CD14-positive monocyte (primary cell): ENCODE measurements at regions of chr1 and their contacts with region 1.

Region 1: DNA sequence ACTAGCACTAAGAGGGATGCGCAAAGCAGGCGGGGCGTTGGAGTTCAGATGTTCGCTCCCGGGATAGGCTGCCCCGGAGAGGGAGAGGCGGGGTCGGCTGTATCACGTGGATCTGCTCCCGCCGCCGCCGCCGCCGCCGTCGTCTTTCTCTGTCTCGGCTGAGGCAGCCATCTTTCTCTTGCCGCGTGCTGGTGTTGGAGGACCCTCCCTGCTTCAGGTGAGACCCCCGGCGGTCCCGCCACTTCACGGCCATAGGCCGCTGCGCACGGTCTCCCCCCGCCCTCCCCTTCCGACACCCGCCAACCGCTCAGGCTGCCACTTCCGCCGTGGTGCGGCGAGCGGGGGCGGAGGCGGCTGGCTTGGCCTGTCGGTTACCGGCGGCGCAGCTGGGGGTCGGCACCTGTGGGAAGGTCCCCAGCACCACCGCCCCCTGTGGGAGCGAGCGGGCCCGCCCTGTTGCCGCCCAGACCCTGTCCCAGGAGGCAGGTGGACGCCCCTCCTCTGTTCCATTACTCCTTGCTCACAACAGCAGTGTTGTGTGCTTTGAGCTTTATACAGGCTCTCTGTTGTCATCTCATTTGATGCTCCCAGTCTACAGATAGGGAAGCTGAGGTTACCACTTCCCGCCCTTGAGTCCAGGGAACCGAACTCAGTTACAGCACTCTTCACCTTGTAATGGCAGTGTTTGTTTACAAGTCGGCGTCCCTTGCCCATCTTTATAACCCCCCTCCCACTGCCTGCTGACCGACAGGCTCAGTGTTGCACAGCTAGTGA is at the start of gene BTF3L4:
- DNase-seq: peak; percentile 69 to 79 (median 75)
- H3K4me3 ChIP-seq: peak within 1 kb of the TSS; percentile 89 to 94 (median 92)
- H3K4me3 Mint-ChIP-seq: peak within 1 kb of the TSS; percentile 98 to 100
- H3K27ac ChIP-seq: peak within 1 kb of the TSS; percentile 87 to 92
- H3K27ac Mint-ChIP-seq: peak within 1 kb of the TSS; percentile 87 to 98 (median 96)
- H3K4me1 ChIP-seq: peaks cover 35 to 45% of the 10 kb centered on the region in 2 donors
- H3K4me1 Mint-ChIP-seq: peaks cover 44% of the 10 kb centered on the region
- H3K27me3 ChIP-seq: no peaks in the 10 kb centered on the region
- H3K27me3 Mint-ChIP-seq: no peaks in the 10 kb centered on the region
- CTCF ChIP-seq: no peak
- polyA plus RNA-seq, gene BTF3L4: 27.0 to 116 (median 108) TPM

Region 2: DNA sequence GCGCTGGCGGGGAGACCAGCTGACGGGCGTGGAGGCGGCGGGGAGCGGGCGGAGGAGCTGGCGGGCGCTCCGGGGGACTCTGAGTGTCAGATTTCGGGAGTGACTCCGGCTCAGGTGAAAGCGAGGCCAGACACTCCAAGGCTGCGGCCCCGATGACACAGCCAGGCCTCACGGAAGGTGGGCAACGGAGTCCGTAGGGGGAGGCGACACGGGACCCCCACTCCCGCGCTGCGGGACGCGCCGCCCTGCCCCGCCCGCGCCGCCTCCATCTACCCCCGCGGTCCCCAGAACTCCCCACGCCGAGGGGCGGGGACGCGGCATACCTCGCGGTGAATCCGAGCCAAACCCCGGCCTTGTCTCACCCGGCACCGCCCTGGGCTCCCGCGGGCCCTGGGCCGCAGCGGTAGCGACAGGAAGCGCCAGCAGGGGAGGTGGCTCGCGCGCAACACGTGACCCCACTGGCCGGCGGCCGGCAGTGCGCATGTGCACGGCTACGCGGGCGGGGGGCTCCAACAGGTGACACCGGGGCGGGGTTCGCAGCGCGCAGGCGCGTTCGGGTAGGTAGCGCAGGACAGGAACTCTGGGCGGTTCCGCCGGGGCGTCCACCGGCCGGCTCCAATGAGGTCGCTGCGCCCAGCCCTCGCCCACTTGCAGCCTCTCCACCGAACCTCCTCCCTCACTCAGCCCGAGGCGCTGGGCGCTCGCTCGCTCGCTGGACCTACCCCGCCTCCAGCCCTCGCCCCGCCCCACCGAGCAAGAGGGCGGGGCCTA is 309.6 kb after region 1 on chr1 and contains the start of gene CC2D1B:
- intact Hi-C with region 1: loop called in 1 of 2 experiments (anchors 2 kb)
- DNase-seq: peak; percentile 95 to 98 (median 97)
- H3K4me3 ChIP-seq: peak within 1 kb of the TSS; percentile 80 to 95 (median 90)
- H3K4me3 Mint-ChIP-seq: peak within 1 kb of the TSS; percentile 96 to 98
- H3K27ac ChIP-seq: peak within 1 kb of the TSS; percentile 73 to 93
- H3K27ac Mint-ChIP-seq: peak within 1 kb of the TSS; percentile 94 to 97 (median 97)
- H3K4me1 ChIP-seq: peaks cover 23 to 30% of the 10 kb centered on the region in 2 donors
- H3K4me1 Mint-ChIP-seq: peaks cover 25% of the 10 kb centered on the region
- H3K27me3 ChIP-seq: peaks cover 0 to 16% of the 10 kb centered on the region in 2 donors
- H3K27me3 Mint-ChIP-seq: peaks cover 11 to 20% (median 12%) of the 10 kb centered on the region in 3 donors
- CTCF ChIP-seq: peak; percentile 15
- polyA plus RNA-seq, gene CC2D1B: 1.7 to 17.5 (median 2.4) TPM

Region 3: GRCh38 chr1:52697795-52698674 is 641.7 kb after region 1 on chr1 and contains the start of gene COA7:
- intact Hi-C with region 1: loop called in 1 of 2 experiments (anchors 10 kb)
- DNase-seq: peak; percentile 63 to 68 (median 67)
- H3K4me3 ChIP-seq: peak within 1 kb of the TSS; percentile 67 to 97 (median 92)
- H3K4me3 Mint-ChIP-seq: peak within 1 kb of the TSS; percentile 96
- H3K27ac ChIP-seq: peak within 1 kb of the TSS; percentile 71 to 88
- H3K27ac Mint-ChIP-seq: peak within 1 kb of the TSS; percentile 87 to 96 (median 92)
- H3K4me1 ChIP-seq: peaks cover 19 to 29% of the 10 kb centered on the region in 2 donors
- H3K4me1 Mint-ChIP-seq: peaks cover 34% of the 10 kb centered on the region
- H3K27me3 ChIP-seq: no peaks in the 10 kb centered on the region
- H3K27me3 Mint-ChIP-seq: peaks cover 0 to 3% (median 1%) of the 10 kb centered on the region in 3 donors
- CTCF ChIP-seq: no peak
- polyA plus RNA-seq, gene COA7: 4.8 to 8.5 (median 6.2) TPM